Activated naive CD4-positive, alpha-beta T cell treated with anti-CD3 and anti-CD28 coated beads for 36 hours (primary cell): ENCODE measurements at regions of chr2 and their contacts with region 1.

Region 1: GRCh38 chr2:10302479-10303180 is at the start of gene HPCAL1:
- DNase-seq: peak; percentile 84
- H3K4me3 Mint-ChIP-seq: peak within 1 kb of the TSS; percentile 99
- H3K27ac Mint-ChIP-seq: peak within 1 kb of the TSS; percentile 83
- H3K4me1 Mint-ChIP-seq: peaks cover 71% of the 10 kb centered on the region
- H3K27me3 Mint-ChIP-seq: no peaks in the 10 kb centered on the region
- total RNA-seq, gene HPCAL1: 71.4 to 73.8 TPM

Region 2: GRCh38 chr2:10269711-10270610 is 32.7 kb before region 1 on chr2:
- CTCF ChIA-PET with region 1: interaction called, 8 read pairs
- intact Hi-C with region 1: loop called (anchors 1 kb)
- DNase-seq: no peak
- H3K4me3 Mint-ChIP-seq: no peak overlapping the region
- H3K27ac Mint-ChIP-seq: no peak overlapping the region
- H3K4me1 Mint-ChIP-seq: peaks cover 7% of the 10 kb centered on the region
- H3K27me3 Mint-ChIP-seq: no peaks in the 10 kb centered on the region

Region 3: DNA sequence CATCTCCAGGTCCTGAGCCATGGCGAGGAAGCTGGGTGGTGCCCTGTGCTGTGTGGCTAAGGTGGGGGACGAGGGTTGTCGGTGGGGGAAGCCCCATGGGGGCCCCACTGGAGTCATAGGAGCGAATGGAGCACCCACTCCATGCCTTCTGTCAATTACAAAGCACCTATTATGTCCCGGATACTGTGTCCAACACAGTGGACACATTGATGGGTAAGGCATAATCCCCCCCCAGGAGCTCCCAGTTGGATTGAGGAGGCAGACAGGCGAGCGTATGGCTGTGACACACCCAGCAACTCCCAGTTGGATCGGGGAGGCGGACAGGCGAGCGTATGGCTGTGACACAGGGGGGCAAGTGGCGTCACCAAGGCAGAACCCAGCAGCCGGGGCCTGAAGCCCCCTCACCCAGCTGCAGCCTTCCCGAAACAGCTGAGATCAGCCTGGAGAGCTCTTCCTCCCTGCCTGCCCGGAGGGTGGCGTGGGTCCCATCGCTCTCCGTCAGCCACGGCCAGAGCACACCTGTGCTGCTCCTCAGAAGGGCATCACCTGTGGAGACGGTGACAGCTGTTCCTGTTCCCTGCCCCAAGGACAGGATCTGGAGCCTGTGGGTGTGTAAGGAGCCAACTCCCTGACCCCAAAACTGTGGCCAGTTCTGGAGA is 69.7 kb after region 1 on chr2:
- CTCF ChIA-PET with region 1: no interaction called
- intact Hi-C with region 1: no loop called
- DNase-seq: no peak
- H3K4me3 Mint-ChIP-seq: no peak overlapping the region
- H3K27ac Mint-ChIP-seq: no peak overlapping the region
- H3K4me1 Mint-ChIP-seq: peaks cover 58% of the 10 kb centered on the region
- H3K27me3 Mint-ChIP-seq: no peaks in the 10 kb centered on the region

Region 4: DNA sequence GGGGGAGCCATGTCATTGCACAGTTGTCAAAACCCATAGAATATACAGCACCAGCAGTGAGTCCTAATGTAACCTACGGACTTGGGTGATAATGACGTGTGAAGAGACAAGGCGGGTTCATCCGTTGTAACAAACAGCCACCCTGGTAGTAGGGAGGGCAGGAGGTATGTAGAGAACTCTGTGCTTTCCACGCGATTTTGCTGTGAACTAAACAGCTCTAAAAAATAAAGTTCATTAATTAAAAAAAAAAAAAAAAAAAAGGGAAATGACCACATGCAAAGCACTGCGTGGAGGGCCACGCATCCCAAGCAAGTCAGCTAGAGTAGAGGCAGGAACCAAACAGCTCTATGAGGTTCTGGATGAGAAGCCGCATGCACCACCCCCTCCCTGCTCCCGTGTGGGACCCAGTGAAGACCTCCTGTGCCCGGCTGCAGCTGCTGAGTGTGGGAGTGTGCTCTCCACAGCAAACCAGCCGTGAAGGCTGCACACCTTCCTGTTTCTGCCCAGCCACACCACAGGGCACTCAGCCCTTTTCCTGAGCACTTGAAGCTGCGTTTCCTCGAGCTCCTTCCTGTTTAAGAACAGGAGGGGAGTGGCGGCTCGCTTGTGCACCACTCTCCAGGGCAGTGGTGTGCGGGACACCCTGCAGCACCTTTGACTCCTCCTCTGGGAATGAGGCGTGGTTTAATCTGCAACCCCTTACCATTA is 79.9 kb after region 1 on chr2:
- CTCF ChIA-PET with region 1: interaction called, 8 read pairs
- intact Hi-C with region 1: loop called (anchors 2 kb)
- DNase-seq: peak; percentile 61
- H3K4me3 Mint-ChIP-seq: peak overlapping the region; percentile 11
- H3K27ac Mint-ChIP-seq: no peak overlapping the region
- H3K4me1 Mint-ChIP-seq: peaks cover 93% of the 10 kb centered on the region
- H3K27me3 Mint-ChIP-seq: no peaks in the 10 kb centered on the region

Region 5: DNA sequence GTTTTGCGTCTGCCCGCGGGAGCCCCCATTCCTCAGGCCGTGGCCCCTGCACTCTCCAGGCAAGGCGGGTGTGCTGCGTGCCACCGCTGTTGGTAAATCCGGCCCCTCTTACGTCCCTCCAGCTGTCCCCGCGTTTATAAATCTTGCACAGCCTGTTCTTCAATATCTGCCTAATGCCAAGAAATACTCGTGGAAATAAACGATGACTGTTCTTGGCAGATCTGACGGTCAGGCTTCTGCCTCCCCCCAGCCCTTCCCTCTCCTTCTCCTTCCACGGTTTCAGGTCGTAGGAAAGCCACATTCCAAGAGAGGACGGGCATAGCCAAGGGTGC is 125.0 kb after region 1 on chr2:
- CTCF ChIA-PET with region 1: no interaction called
- intact Hi-C with region 1: no loop called
- DNase-seq: no peak
- H3K4me3 Mint-ChIP-seq: no peak overlapping the region
- H3K27ac Mint-ChIP-seq: no peak overlapping the region
- H3K4me1 Mint-ChIP-seq: peaks cover 3% of the 10 kb centered on the region
- H3K27me3 Mint-ChIP-seq: peaks cover 5% of the 10 kb centered on the region